IMR-90 (cell line): ENCODE measurements at regions of chr22 and their contacts with region 1.

Region 1: DNA sequence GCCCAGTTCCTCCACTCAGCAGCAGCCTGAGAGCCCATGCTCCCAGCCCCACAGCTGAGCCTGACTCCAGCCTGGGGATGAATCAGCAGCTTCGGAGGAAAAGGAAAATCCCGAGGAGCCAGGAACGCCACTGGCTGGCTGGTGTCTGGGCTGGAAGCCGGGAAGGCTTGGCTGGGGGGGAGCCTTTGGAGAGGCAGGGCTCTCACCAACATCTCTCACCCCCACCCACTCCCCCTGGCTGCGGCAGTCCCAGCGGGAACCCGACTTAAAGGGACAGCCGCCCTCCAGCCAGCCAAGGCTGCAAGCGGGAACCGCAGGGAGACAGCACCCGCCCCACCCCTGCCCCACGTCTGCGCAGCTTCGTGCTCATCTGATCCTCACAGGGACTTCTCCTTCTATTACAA is 28.4 kb downstream of the KIAA0930 start:
- DNase-seq: peak; percentile 96
- ATAC-seq: peak; percentile 81
- H3K4me3 ChIP-seq: peak overlapping the region; percentile 30
- H3K27ac ChIP-seq: peak overlapping the region; percentile 75
- H3K4me1 ChIP-seq: peaks cover 45% of the 10 kb centered on the region
- H3K27me3 ChIP-seq: no peaks in the 10 kb centered on the region
- CTCF ChIP-seq: peak; percentile 17; the same call in 1 of the 2 replicates
- POLR2A ChIP-seq: peak; percentile 84
- RAD21 ChIP-seq: peak; percentile 29

Region 2: GRCh38 chr22:44304354-44304753 is 908.0 kb before region 1 on chr22:
- CTCF ChIA-PET with region 1: no interaction called
- POLR2A ChIA-PET with region 1: no interaction called
- dilution Hi-C with region 1: no loop called
- in situ Hi-C with region 1: no loop called
- intact Hi-C with region 1: no loop called
- DNase-seq: peak; percentile 47
- ATAC-seq: peak; percentile 28
- H3K4me3 ChIP-seq: no peak overlapping the region
- H3K27ac ChIP-seq: no peak overlapping the region
- H3K4me1 ChIP-seq: peaks cover 13% of the 10 kb centered on the region
- H3K27me3 ChIP-seq: peaks cover 3% of the 10 kb centered on the region; the same call in 1 of the 2 replicates
- CTCF ChIP-seq: no peak
- POLR2A ChIP-seq: no peak
- RAD21 ChIP-seq: no peak

Region 3: DNA sequence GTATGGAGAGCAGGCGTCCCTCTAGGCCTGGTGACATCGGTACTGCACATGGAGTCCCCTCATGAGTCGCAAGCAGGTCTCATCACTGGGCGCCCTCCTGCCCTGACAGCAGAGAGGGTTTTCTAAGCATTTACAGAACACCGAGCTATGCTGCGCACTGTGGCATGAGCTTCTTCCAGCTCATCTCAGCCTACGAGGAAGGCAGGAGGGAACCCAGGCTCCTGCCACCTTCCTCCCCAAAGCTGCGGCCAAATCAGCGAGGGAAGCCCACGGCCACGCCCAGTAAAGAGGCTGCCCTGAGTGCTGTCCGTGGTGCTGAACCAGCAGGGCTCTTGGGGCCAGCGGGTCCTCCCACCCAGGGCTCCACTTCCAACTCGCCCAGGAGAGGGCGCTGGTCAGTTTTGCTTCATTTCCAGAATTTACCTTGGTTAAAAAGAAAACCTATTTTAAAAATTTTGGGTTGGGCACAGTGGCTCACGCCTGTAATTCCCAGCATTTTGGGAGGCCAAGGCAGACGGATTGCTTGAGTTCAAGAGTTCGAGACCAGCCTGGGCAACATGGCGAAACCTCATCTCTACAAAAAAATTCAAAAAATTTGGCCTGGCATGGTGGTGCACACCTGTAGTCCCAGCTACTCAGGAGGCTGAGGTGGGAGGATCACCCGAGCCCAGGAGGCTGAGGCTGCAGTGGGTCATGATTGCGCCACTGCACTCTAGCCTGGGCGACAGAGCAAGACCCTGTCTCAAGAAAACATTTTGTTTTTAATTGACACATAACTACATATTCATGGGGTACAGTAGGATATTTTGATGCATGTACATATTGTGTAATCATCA is 236.7 kb before region 1 on chr22:
- CTCF ChIA-PET with region 1: no interaction called
- POLR2A ChIA-PET with region 1: no interaction called
- dilution Hi-C with region 1: no loop called
- in situ Hi-C with region 1: no loop called
- intact Hi-C with region 1: loop called (anchors 1 kb)
- DNase-seq: peak; percentile 76
- ATAC-seq: peak; percentile 99
- H3K4me3 ChIP-seq: no peak overlapping the region
- H3K27ac ChIP-seq: no peak overlapping the region
- H3K4me1 ChIP-seq: no peaks in the 10 kb centered on the region
- H3K27me3 ChIP-seq: peaks cover 30% of the 10 kb centered on the region
- CTCF ChIP-seq: peak; percentile 92
- POLR2A ChIP-seq: no peak
- RAD21 ChIP-seq: peak; percentile 78

Region 4: DNA sequence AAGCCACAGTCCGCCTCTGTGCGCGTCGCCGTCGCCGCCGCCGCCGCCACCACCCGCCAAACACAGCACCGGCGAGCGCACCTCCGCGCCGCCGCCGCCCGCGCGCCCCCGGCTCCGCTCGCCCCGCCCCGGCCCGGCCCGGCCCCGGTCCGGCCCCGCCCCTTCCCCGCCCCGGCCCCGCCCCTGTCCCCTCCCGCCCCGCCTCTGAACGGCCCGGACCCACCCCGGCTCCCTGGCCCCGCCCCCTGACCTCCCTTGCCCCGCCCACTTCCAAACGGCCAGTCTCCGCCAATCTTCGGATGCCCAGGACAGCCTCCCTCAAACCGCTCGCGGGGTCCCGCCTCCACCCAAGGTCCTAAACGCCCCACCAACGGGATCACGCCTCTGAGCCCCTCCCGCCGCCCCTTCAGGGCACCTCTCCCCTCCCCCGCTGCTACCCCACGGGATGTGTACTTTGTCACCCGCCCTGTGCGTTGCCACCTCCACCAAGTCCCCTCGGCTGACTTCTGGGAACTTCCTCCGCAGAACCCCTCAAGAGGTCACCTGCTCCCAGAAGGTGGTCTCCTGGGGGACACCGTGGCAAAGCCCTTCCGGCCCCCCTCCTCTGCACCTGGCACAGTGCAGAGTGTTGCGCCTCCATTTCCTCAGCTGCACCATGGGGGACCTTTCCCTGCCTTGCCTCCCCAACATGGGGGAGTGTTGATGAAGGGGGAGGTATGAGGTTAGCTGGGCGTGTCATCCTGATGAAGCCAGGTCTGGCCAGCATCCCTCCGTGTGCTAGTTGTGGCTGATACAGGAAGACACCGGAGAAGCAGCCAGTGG is 28.7 kb after region 1 on chr22 and contains the start of gene KIAA0930:
- CTCF ChIA-PET with region 1: no interaction called
- POLR2A ChIA-PET with region 1: no interaction called
- dilution Hi-C with region 1: no loop called
- in situ Hi-C with region 1: no loop called
- intact Hi-C with region 1: loop called (anchors 2 kb)
- DNase-seq: peak; percentile 68
- ATAC-seq: peak; percentile 86
- H3K4me3 ChIP-seq: peak within 1 kb of the TSS; percentile 92
- H3K27ac ChIP-seq: peak within 1 kb of the TSS; percentile 15; the same call in 1 of the 2 replicates
- H3K4me1 ChIP-seq: peaks cover 5% of the 10 kb centered on the region; the same call in 1 of the 2 replicates
- H3K27me3 ChIP-seq: no peaks in the 10 kb centered on the region
- CTCF ChIP-seq: no peak
- POLR2A ChIP-seq: no peak
- RAD21 ChIP-seq: no peak
- total RNA-seq, gene KIAA0930: 21.7 and 25.3 TPM in 2 replicates